ENCODE measurements at regions of chr1 and their contacts with region 1.

Region 1: GRCh38 chr1:212035123-212035834 is at the starts of genes DTL and INTS7:
- H3K4me3 ChIP-seq: peak within 1 kb of the TSS; percentile 91
- H3K27ac ChIP-seq: peak within 1 kb of the TSS; percentile 68
- H3K4me1 ChIP-seq: peaks cover 3% of the 10 kb centered on the region; the same call in 1 of the 2 replicates
- CTCF ChIP-seq: peak; percentile 100

Region 2: GRCh38 chr1:211675230-211676105 is 359.8 kb before region 1 on chr1 and contains the start of gene NEK2:
- CTCF ChIA-PET with region 1: interaction called, 57 read pairs
- POLR2A ChIA-PET with region 1: interaction called, 12 read pairs
- H3K4me3 ChIP-seq: peak within 1 kb of the TSS; percentile 73
- H3K27ac ChIP-seq: peak within 1 kb of the TSS; percentile 40; the same call in 1 of the 2 replicates
- H3K4me1 ChIP-seq: peaks cover 3% of the 10 kb centered on the region; the same call in 1 of the 2 replicates
- CTCF ChIP-seq: peak; percentile 28; the same call in 1 of the 2 replicates

Region 3: GRCh38 chr1:211698161-211699026 is 336.9 kb before region 1 on chr1:
- CTCF ChIA-PET with region 1: interaction called, 47 read pairs
- POLR2A ChIA-PET with region 1: no interaction called
- H3K4me3 ChIP-seq: no peak overlapping the region
- H3K27ac ChIP-seq: no peak overlapping the region
- H3K4me1 ChIP-seq: no peaks in the 10 kb centered on the region
- CTCF ChIP-seq: peak; percentile 93

Region 4: DNA sequence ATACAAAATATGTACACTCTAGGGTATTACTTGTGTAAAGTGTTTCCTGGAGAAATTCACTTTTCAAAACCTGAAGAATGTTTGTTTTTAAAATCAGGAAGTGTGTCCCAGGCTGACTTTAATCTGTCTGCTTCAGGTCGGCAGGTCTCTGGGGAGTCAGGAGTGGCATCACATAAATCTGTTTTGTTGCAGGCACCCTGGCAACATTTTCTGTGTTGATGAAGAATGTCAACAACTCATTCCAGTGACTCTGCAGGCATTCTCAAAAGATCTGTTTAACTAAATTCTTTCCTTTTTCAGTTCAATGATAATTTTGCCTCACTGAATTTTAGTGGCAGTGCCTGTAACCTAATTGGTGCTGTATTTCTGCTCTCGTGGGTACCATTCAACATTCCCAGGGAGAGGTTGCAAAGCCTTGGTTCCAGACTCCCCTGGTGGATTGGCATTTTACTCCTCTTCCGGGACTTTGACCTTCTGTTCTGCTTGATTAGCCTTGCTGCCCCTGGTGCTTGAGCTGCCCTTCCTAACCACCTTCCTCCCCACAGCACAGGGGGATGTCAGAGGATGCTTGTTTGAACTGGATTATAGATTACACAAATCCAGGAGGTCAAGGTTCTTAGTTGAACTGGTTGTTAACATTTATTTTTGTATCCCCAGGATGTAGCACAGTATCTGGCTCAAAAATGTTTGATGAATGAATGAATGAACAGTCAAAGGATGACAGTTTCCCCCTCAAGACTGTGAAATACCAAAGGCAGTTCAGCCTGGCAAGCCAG is 149.3 kb before region 1 on chr1:
- CTCF ChIA-PET with region 1: no interaction called
- POLR2A ChIA-PET with region 1: no interaction called
- H3K4me3 ChIP-seq: no peak overlapping the region
- H3K27ac ChIP-seq: no peak overlapping the region
- H3K4me1 ChIP-seq: no peaks in the 10 kb centered on the region
- CTCF ChIP-seq: no peak

Region 5: GRCh38 chr1:212012034-212012740 is 23.1 kb before region 1 on chr1:
- CTCF ChIA-PET with region 1: interaction called, 48 read pairs
- POLR2A ChIA-PET with region 1: interaction called, 4 read pairs
- H3K4me3 ChIP-seq: no peak overlapping the region
- H3K27ac ChIP-seq: no peak overlapping the region
- H3K4me1 ChIP-seq: no peaks in the 10 kb centered on the region
- CTCF ChIP-seq: peak; percentile 59

Region 6: GRCh38 chr1:212045981-212046380 is 10.7 kb after region 1 on chr1:
- CTCF ChIA-PET with region 1: interaction called, 39 read pairs
- POLR2A ChIA-PET with region 1: interaction called, 4 read pairs
- H3K4me3 ChIP-seq: no peak overlapping the region
- H3K27ac ChIP-seq: no peak overlapping the region
- H3K4me1 ChIP-seq: no peaks in the 10 kb centered on the region
- CTCF ChIP-seq: no peak

Region 7: GRCh38 chr1:212070720-212071302 is 35.5 kb after region 1 on chr1:
- CTCF ChIA-PET with region 1: interaction called, 10 read pairs
- POLR2A ChIA-PET with region 1: interaction called, 6 read pairs
- H3K4me3 ChIP-seq: no peak overlapping the region
- H3K27ac ChIP-seq: no peak overlapping the region
- H3K4me1 ChIP-seq: no peaks in the 10 kb centered on the region
- CTCF ChIP-seq: peak; percentile 29; the same call in 1 of the 2 replicates

Region 8: DNA sequence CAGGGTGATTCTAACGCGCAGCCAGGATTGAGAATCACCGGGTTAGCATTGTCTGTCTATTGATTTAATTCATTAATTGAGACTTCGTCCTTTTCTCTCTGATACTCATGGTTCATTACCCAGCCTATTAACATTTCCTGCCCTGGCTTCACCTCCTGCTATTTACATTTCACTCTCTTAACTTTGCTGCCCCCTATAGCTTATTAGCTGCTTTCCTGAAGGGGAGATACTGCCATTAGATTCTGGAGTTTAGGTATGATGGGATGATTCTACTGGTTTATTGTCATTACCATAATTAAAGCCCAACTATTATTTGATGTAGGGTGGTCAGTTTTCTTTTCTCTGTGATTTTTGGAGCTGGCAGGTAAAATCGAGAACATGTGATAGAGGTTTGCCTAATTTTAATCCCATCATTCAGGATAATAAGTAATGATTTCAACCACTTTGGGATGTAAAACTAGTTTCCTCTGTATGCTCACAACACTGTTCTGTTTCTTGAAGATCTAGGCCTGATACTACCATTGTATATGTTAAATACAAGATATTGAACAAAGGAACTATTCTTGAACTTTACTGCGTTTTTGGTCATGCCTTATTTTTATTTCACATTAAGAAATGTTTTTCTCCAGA is 256.3 kb after region 1 on chr1:
- CTCF ChIA-PET with region 1: interaction called, 13 read pairs
- POLR2A ChIA-PET with region 1: interaction called, 8 read pairs
- H3K4me3 ChIP-seq: no peak overlapping the region
- H3K27ac ChIP-seq: no peak overlapping the region
- H3K4me1 ChIP-seq: peaks cover 15% of the 10 kb centered on the region; the same call in 1 of the 2 replicates
- CTCF ChIP-seq: peak; percentile 58